ENCODE measurements at regions of chr3 and their contacts with region 1.

Region 1: DNA sequence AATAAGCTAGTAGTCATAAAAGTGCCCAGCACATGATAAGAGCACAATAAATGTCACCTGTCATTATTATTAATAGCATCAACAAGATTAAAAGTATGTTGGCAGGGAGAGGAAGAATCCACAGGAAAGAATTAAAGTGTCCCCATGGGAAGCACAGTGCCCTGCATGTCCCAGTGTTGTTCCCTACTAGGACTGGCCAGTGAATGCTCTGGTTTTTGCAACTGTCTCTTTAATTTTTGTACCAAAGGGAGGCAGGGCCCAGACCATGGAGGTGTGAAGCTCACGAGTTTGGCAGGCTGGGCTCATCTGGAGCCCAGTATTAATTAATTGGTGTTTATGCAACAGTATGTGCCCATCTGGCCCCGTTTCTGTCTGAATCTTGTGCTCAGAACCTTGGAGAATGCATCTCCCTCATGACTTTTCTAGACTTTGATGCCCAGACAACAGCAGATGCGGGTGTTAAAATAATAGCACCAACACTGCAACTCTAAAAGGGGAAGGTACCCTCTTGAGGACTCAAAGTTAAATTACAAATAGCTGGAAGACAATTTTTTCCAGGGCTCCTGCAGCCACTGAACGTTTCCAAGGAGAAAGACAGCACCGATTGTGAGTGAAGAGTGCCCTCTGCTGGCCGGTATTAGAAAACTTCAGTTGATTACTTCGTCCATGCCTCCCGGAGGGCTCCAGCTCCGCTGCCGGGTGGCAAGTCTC is 71.9 kb upstream of the SPATA12 start:
- DNase-seq: peak; percentile 78
- H3K4me3 Mint-ChIP-seq: no peak overlapping the region
- H3K27ac Mint-ChIP-seq: no peak overlapping the region
- H3K4me1 Mint-ChIP-seq: peaks cover 19% of the 10 kb centered on the region
- H3K27me3 Mint-ChIP-seq: peaks cover 14% of the 10 kb centered on the region

Region 2: GRCh38 chr3:56693750-56694149 is 294.9 kb before region 1 on chr3:
- CTCF ChIA-PET with region 1: interaction called, 10 read pairs
- POLR2A ChIA-PET with region 1: no interaction called
- intact Hi-C with region 1: no loop called
- DNase-seq: no peak
- H3K4me3 Mint-ChIP-seq: no peak overlapping the region
- H3K27ac Mint-ChIP-seq: no peak overlapping the region
- H3K4me1 Mint-ChIP-seq: peaks cover 42% of the 10 kb centered on the region
- H3K27me3 Mint-ChIP-seq: no peaks in the 10 kb centered on the region

Region 3: DNA sequence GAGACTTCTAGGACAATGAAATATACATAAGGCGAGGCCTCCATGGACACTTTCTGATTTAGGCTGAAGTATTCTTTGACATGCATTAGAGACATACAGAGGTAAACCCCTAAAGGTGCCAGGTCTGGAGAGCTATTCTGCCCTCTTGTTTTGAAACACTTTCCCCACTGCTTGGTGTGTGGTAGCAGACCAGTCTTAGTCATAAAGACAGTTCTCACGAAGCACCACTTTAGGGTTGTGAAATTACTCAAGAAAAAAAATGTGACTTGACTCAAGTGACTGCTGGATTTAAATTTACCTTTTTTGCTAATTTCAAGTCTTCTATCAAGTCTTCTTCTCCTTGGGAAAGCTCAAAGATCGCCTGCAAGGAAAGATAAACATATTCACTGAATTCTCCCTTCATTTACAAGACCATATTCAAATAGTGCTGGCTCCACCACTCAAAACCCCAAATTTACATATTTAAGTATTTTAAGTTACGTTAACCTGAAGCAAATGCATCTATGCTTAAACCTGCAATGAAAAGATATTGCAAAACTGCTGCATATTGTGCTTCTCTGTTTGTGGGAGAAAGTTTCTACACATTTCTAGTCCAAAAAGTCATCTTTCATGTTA is 235.3 kb before region 1 on chr3:
- CTCF ChIA-PET with region 1: interaction called, 19 read pairs
- POLR2A ChIA-PET with region 1: no interaction called
- intact Hi-C with region 1: no loop called
- DNase-seq: peak; percentile 73
- H3K4me3 Mint-ChIP-seq: peak overlapping the region; percentile 18
- H3K27ac Mint-ChIP-seq: peak overlapping the region; percentile 23
- H3K4me1 Mint-ChIP-seq: peaks cover 57% of the 10 kb centered on the region
- H3K27me3 Mint-ChIP-seq: no peaks in the 10 kb centered on the region

Region 4: GRCh38 chr3:56801662-56802377 is 186.8 kb before region 1 on chr3 and contains the start of gene ARHGEF3:
- CTCF ChIA-PET with region 1: interaction called, 221 read pairs
- POLR2A ChIA-PET with region 1: interaction called, 5 read pairs
- intact Hi-C with region 1: loop called (anchors 1 kb)
- DNase-seq: peak; percentile 92
- H3K4me3 Mint-ChIP-seq: peak within 1 kb of the TSS; percentile 84
- H3K27ac Mint-ChIP-seq: peak within 1 kb of the TSS; percentile 76
- H3K4me1 Mint-ChIP-seq: peaks cover 42% of the 10 kb centered on the region
- H3K27me3 Mint-ChIP-seq: no peaks in the 10 kb centered on the region
- total RNA-seq, gene ARHGEF3: 28.0 to 31.5 TPM

Region 5: GRCh38 chr3:56825567-56826438 is 162.8 kb before region 1 on chr3:
- CTCF ChIA-PET with region 1: interaction called, 19 read pairs
- POLR2A ChIA-PET with region 1: no interaction called
- intact Hi-C with region 1: no loop called
- DNase-seq: no peak
- H3K4me3 Mint-ChIP-seq: no peak overlapping the region
- H3K27ac Mint-ChIP-seq: no peak overlapping the region
- H3K4me1 Mint-ChIP-seq: peaks cover 48% of the 10 kb centered on the region
- H3K27me3 Mint-ChIP-seq: no peaks in the 10 kb centered on the region

Region 6: DNA sequence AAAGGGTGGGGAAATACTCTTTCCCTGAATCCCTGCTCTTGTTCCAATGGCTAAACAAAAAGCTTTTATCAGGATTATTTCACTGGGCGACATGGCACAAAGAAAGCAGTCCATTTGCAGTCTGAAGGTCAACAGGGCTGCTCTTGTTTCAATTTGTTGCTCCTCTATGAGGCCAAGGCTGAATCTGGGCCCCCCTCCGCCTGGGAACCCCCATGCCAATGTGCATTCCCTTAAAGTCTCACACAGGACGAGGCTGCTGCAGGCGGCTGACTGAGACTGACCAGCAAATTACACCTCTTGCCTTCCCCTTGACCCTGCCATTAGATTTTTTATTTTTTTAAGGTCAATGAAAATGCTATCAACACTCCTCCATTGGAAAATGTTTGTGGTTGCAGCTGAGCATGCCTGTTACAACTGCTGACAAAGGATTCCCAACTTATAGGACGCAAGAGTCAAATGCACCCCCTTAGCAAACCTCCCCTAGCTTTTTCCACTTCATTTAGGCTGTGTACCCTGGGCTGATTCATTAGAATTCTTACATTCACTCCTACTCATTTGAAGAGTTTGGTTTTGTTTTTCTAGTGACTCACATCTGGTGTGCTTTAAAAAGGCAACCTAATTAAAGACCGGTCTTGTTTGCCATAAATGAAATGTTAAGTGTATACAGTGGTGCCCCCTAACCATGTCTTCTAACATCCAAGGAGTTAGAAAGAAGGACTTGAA is 126.1 kb before region 1 on chr3:
- CTCF ChIA-PET with region 1: interaction called, 24 read pairs
- POLR2A ChIA-PET with region 1: no interaction called
- intact Hi-C with region 1: loop called (anchors 2 kb)
- DNase-seq: peak; percentile 39
- H3K4me3 Mint-ChIP-seq: peak overlapping the region; percentile 32
- H3K27ac Mint-ChIP-seq: peak overlapping the region; percentile 81
- H3K4me1 Mint-ChIP-seq: peaks cover 73% of the 10 kb centered on the region
- H3K27me3 Mint-ChIP-seq: no peaks in the 10 kb centered on the region

Measured in activated CD4-positive, alpha-beta memory T cell treated with anti-CD3 and anti-CD28 coated beads for 36 hours (primary cell).